ENCODE measurements at regions of chr19 and their contacts with region 1.

Region 1: DNA sequence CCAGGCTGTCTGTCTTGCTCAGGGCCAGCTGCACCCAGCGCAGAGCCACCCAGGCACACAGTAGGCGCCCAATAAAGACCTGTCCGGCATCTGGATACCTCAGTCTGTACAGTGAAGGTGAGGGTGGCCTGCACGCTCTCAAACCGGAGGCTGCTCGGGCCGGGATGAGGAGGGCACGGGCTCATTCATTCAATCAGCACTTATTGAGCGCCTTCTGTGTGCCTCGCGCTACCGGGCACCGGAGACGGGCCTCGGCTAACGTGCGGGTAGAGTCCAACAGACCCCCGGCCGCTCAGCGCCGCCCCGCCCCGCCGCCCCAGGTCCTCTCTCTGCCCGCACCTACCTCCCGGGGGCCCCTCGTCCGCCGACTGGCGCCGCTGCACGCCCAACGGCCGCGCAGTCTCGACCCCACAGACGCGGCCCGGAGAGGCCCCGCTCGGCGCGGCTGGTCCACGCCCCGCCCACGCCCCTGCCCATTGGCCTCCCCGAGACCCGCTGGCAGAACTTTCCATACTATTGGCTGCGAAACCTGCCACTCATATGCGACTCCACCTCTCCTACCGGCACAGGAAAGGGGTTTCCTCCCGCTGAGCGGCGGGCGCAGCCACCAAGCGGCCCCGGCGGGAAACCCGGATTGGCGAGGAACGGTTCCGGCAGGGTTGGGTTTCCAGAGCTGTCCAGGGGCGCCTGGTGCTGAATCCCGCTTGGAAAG is at the start of gene SLC39A3:
- DNase-seq: peak; percentile 98 to 99
- ATAC-seq: peak; percentile 100
- H3K4me3 ChIP-seq: peak within 1 kb of the TSS; percentile 75 to 82 (median 80)
- H3K27ac ChIP-seq: peak within 1 kb of the TSS; percentile 58 to 76 (median 74)
- H3K4me1 ChIP-seq: peaks cover 4 to 13% of the 10 kb centered on the region in 2 donors
- H3K27me3 ChIP-seq: no peaks in the 10 kb centered on the region
- CTCF ChIP-seq: peak in 4 of 5 experiments; percentile 23 to 39 (median 34)
- POLR2A ChIP-seq: no peak
- total RNA-seq, gene SLC39A3: 23.1 to 60.9 (median 27.1) TPM

Region 2: GRCh38 chr19:2653710-2654707 is 85.7 kb before region 1 on chr19:
- in situ Hi-C with region 1: loop called in 2 of 4 experiments (anchors 10 kb)
- intact Hi-C with region 1: no loop called
- DNase-seq: no peak
- ATAC-seq: no peak
- H3K4me3 ChIP-seq: no peak overlapping the region
- H3K27ac ChIP-seq: no peak overlapping the region
- H3K4me1 ChIP-seq: no peaks in the 10 kb centered on the region
- H3K27me3 ChIP-seq: peaks cover 0 to 5% (median 0%) of the 10 kb centered on the region in 3 donors
- CTCF ChIP-seq: no peak
- POLR2A ChIP-seq: no peak

Region 3: DNA sequence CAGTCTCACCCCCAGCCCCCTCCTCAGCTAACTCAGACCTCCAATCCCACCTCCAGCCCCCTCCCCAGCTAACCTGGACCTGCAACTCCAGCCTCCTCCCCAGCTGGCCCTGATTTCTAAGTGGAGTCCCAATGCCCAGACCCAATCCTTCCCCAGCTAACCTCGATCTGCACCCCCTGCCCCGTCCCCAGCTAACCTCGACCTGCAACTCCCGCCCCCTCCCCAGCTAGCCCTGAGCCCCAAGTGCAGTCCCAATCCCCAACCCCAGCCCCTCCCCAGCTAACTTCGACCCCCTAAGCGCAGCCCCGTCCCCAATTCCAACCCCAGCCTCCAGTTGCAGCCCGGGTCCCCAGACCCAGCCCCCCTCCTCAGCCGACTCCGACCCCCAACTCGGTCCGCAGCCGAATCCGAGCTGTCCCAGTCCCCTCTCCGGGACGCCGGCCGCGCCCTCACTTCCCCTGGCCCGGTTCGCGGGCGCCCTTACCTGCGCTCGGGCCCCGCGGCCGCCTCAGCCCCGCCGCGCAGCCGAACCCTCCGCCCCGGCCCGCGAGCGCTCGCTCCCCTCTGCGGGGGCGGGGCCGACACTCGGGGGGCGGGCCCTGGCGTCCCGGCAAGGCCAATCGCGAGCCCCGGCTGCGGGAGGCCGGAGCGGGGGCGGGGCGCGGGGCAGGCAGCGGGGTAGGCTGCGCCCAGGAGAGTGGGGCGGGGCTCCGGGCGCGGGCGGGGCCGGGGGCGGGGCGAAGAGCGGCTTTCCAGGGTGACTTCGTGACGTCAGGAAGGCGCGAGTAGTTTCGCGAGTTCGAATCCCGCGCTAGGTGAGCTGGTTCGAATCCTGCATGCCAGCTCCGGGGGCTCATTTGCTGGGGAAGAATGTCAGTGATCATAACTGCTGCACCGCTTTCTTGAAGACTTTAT is 37.3 kb before region 1 on chr19 and contains the start of gene GNG7:
- in situ Hi-C with region 1: no loop called
- intact Hi-C with region 1: loop called (anchors 2 kb)
- DNase-seq: peak; percentile 78 to 79
- ATAC-seq: peak; percentile 93 to 94
- H3K4me3 ChIP-seq: peak within 1 kb of the TSS; percentile 43 to 62 (median 58)
- H3K27ac ChIP-seq: peak within 1 kb of the TSS in 2 of 4 donors; percentile 43 to 52
- H3K4me1 ChIP-seq: peaks cover 3 to 9% of the 10 kb centered on the region in 2 donors
- H3K27me3 ChIP-seq: no peaks in the 10 kb centered on the region
- CTCF ChIP-seq: no peak
- POLR2A ChIP-seq: peak; percentile 51 to 70
- total RNA-seq, gene GNG7: 0.46 to 1.1 (median 0.62) TPM

Region 4: DNA sequence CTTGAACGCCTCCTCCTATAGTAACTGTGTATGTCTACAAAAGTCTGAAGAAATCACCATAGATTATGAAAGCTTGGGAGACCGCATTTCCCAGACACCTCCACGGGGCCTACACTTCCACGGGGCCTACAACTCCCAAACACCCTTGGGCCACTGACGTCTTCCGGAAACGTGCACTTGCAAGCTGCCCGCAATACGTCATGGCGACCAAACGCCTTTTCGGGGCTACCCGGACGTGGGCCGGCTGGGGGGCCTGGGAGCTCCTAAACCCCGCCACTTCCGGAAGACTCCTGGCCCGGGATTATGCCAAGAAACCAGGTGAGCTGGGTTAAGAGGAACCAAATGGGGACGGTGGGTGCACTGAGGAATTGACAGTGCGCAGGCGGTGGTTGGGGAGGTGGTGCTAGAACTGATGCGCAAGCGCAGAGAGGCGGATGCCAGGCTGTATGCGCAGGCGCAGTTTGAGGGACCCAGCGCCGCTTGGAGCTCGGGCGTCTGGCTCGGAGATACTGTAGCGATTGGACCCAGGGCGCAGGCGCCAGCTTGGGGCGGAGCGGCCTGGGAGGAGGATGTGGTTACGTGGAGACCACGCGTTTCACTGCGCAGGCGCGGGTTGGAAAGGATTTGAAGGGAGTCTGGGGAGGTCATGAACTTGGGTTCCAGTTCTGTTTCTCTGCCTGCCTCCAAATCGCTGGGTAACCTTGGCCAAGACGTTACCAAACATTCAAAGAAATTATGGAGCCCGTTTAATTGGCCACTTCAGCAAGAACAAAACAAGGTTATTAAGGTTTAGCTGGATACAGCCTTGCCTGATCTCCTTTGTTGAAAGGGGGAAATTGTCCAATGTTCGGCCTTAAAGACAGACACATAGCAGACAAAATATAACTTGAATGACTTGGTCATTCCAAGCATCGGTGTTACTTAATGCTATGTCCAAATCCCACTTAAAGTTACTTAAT is 1023.0 kb after region 1 on chr19 and contains the start of gene MRPL54:
- in situ Hi-C with region 1: no loop called
- intact Hi-C with region 1: loop called (anchors 5 kb)
- DNase-seq: peak; percentile 98 to 99
- ATAC-seq: peak; percentile 95 to 96
- H3K4me3 ChIP-seq: peak within 1 kb of the TSS; percentile 83 to 97 (median 90)
- H3K27ac ChIP-seq: peak within 1 kb of the TSS; percentile 92 to 100 (median 98)
- H3K4me1 ChIP-seq: peaks cover 21 to 22% of the 10 kb centered on the region in 2 donors
- H3K27me3 ChIP-seq: no peaks in the 10 kb centered on the region
- CTCF ChIP-seq: no peak
- POLR2A ChIP-seq: peak; percentile 68 to 78
- total RNA-seq, gene MRPL54: 23.3 to 86.3 (median 63.3) TPM

Measured in gastrocnemius medialis (tissue), 4 donors.